Sigmoid colon (tissue), 7 donors: ENCODE measurements at regions of chr19 and their contacts with region 1.

Region 1: GRCh38 chr19:32012886-32013631 is 332.4 kb upstream of the ZNF507 start:
- DNase-seq: no peak
- H3K4me3 ChIP-seq: no peak overlapping the region
- H3K27ac ChIP-seq: peak overlapping the region in 1 of 4 donors; percentile 47
- H3K4me1 ChIP-seq: peaks cover 0 to 37% (median 26%) of the 10 kb centered on the region in 4 donors
- H3K27me3 ChIP-seq: no peaks in the 10 kb centered on the region
- CTCF ChIP-seq: no peak
- EP300 ChIP-seq: no peak
- POLR2A ChIP-seq: no peak

Region 2: GRCh38 chr19:31970027-31970461 is 43.0 kb before region 1 on chr19:
- intact Hi-C with region 1: loop called (anchors 5 kb)
- DNase-seq: peak; percentile 71
- H3K4me3 ChIP-seq: no peak overlapping the region
- H3K27ac ChIP-seq: peak overlapping the region in 3 of 4 donors; percentile 45 to 71 (median 65)
- H3K4me1 ChIP-seq: peaks cover 0 to 35% (median 31%) of the 10 kb centered on the region in 4 donors
- H3K27me3 ChIP-seq: no peaks in the 10 kb centered on the region
- CTCF ChIP-seq: no peak
- EP300 ChIP-seq: peak in 3 of 4 donors; percentile 28 to 75 (median 51)
- POLR2A ChIP-seq: no peak